GM12878 (cell line): ENCODE measurements at regions of chr1 and their contacts with region 1.

Region 1: DNA sequence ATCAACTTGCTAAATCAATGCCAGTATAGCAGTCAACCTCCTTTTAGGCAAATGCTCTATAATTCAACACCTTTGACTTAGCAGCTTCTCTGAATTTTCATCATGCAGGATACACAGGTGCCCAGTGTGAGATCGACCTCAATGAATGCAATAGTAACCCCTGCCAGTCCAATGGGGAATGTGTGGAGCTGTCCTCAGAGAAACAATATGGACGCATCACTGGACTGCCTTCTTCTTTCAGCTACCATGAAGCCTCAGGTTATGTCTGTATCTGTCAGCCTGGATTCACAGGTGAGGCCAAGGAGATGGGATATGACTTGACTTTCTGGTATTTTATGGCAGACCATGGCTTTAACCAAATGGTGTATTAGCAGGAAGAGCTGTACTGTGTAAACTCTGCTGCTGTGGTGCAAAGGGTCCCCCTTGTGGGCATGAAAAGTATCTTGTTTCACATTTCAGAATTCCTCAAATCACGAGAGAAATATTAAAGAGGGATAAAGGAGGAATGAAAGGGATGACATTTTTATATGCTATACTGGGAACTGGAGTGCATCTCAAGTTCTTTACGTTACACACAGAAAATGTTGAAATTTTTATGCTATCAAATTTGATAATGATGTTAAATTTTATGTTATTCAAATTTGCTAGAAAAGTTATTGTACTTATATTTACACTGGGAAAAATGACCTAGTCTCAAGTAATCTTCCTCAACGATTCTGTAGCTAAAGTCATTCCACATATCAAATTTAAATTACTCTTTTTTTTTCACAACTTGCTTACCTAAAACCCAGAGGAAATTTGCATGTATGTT is 88.9 kb downstream of the CRB1 start:
- DNase-seq: no peak
- ATAC-seq: peak; percentile 90
- H3K4me3 ChIP-seq: no peak overlapping the region
- H3K27ac ChIP-seq: no peak overlapping the region
- H3K4me1 ChIP-seq: no peaks in the 10 kb centered on the region
- H3K27me3 ChIP-seq: no peaks in the 10 kb centered on the region
- CTCF ChIP-seq: peak; percentile 59 to 72 (median 59)
- EP300 ChIP-seq: no peak
- POLR2A ChIP-seq: no peak
- RAD21 ChIP-seq: peak; percentile 89

Region 2: DNA sequence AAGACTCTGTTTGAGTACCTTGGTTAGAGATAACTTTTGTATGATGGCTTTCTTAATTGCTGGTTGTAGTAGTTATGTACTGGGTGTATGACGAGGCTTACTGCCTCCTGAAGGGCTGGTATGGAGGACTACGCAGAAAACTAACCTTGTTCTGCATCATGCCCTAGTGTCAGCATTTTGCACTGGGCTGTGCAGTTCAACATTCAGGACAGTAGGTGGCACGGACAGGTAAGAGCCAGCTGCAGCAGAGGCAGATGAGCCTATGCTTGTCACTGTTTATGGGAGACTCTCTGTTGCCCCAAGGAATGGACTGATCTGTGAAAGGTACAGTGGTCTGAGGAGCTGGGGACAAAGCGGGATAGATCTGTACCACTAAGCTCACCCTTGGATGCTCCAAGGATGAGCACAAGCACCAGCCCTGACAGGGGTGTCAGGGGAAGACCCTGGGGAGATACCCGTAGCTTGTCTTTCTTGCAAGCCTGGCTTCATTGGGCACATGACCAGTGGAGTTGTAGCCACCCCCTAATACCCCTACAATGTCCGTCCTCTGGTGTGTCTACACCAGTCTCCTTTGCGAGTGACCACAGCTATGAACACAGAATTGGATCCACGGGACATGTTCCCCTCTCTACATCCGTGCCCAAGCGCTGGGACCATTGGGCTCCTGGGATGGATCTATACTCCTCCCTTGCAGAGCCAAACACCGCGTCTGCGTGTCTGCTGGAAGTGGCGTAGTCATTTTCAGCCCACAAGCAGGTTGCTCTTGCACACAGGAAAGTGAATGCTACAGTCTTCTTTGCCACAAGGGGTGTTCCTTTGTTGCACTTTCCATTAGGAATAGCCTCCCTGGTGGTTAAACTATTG is 633.4 kb before region 1 on chr1:
- CTCF ChIA-PET with region 1: interaction called, 10 read pairs
- POLR2A ChIA-PET with region 1: no interaction called
- RAD21 ChIA-PET with region 1: no interaction called
- SMC1A ChIA-PET with region 1: no interaction called
- in situ Hi-C with region 1: no loop called
- intact Hi-C with region 1: loop called (anchors 10 kb)
- DNase-seq: no peak
- ATAC-seq: peak; percentile 95
- H3K4me3 ChIP-seq: no peak overlapping the region
- H3K27ac ChIP-seq: no peak overlapping the region
- H3K4me1 ChIP-seq: no peaks in the 10 kb centered on the region
- H3K27me3 ChIP-seq: no peaks in the 10 kb centered on the region; a peak in 1 of 4 replicates
- CTCF ChIP-seq: peak; percentile 62 to 84 (median 75)
- EP300 ChIP-seq: no peak
- POLR2A ChIP-seq: no peak
- RAD21 ChIP-seq: peak; percentile 48

Region 3: GRCh38 chr1:196853406-196853805 is 503.5 kb before region 1 on chr1:
- CTCF ChIA-PET with region 1: no interaction called
- POLR2A ChIA-PET with region 1: no interaction called
- RAD21 ChIA-PET with region 1: no interaction called
- SMC1A ChIA-PET with region 1: no interaction called
- in situ Hi-C with region 1: loop called (anchors 25 kb)
- intact Hi-C with region 1: no loop called
- DNase-seq: no peak
- ATAC-seq: no peak
- H3K4me3 ChIP-seq: no peak overlapping the region
- H3K27ac ChIP-seq: no peak overlapping the region
- H3K4me1 ChIP-seq: no peaks in the 10 kb centered on the region
- H3K27me3 ChIP-seq: no peaks in the 10 kb centered on the region
- CTCF ChIP-seq: no peak
- EP300 ChIP-seq: no peak
- POLR2A ChIP-seq: no peak
- RAD21 ChIP-seq: no peak

Region 4: DNA sequence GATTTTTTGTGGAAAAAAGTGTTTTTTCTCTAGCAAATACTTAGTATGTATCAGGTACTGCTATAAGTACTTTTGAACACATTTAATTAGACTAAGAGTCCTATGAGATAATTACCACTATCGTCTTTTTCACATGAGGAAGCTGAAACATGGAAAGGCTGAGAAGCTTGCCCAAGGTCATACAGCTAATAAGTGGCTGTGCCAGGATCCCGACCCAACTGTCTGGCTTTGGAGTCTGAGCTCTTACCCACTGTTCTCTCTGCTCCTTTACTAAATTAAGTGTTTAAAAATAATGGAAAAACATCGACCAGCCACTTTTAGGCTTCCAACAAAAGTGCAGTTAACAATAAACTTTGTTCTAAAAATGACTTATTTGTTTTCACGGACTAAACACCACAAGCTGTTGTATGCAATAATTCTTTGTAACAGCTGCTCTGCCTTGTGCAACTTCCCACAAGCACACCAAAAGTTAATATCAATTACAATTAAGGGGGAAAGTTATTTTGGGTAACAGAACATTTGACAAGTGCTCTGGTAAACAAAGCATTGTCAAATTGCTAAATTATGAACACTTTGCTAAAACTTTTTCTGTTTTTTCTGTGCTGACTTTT is 13.2 kb before region 1 on chr1:
- CTCF ChIA-PET with region 1: interaction called, 12 read pairs
- POLR2A ChIA-PET with region 1: interaction called, 4 read pairs
- RAD21 ChIA-PET with region 1: no interaction called
- SMC1A ChIA-PET with region 1: interaction called, 3 read pairs
- in situ Hi-C with region 1: no loop called
- intact Hi-C with region 1: no loop called
- DNase-seq: no peak
- ATAC-seq: no peak
- H3K4me3 ChIP-seq: no peak overlapping the region
- H3K27ac ChIP-seq: no peak overlapping the region
- H3K4me1 ChIP-seq: no peaks in the 10 kb centered on the region
- H3K27me3 ChIP-seq: no peaks in the 10 kb centered on the region
- CTCF ChIP-seq: no peak
- EP300 ChIP-seq: no peak
- POLR2A ChIP-seq: no peak
- RAD21 ChIP-seq: no peak